ENCODE measurements at regions of chr14 and their contacts with region 1.

Region 1: DNA sequence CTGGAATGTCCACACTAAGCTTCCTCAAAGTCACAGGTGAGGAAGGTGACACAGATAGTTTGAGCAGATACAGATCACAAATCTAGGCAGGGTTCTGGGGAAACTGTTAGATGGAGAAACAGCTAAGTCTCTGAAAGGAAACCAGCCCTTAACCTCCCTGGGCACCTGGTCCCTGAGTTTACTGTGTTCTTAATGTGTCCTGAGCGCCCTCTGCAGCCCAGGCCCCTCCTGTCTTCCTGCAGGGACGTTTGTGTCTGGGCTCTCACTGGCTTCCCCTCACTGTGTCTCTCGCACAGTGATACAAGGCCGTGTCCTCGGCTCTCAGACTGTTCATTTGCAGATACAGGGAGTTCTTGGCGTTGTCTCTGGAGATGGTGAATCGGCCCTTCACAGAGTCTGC is 684.3 kb downstream of the TMEM121 start:
- DNase-seq: peak; percentile 36
- H3K4me3 Mint-ChIP-seq: no peak overlapping the region
- H3K27ac Mint-ChIP-seq: no peak overlapping the region
- H3K4me1 Mint-ChIP-seq: peaks cover 6% of the 10 kb centered on the region
- H3K27me3 Mint-ChIP-seq: peaks cover 39% of the 10 kb centered on the region

Region 2: GRCh38 chr14:106460916-106461315 is 250.3 kb after region 1 on chr14:
- CTCF ChIA-PET with region 1: interaction called, 70 read pairs
- POLR2A ChIA-PET with region 1: no interaction called
- DNase-seq: no peak
- H3K4me3 Mint-ChIP-seq: no peak overlapping the region
- H3K27ac Mint-ChIP-seq: no peak overlapping the region
- H3K4me1 Mint-ChIP-seq: peaks cover 13% of the 10 kb centered on the region
- H3K27me3 Mint-ChIP-seq: peaks cover 6% of the 10 kb centered on the region

Measured in activated CD4-positive, alpha-beta memory T cell treated with anti-CD3 and anti-CD28 coated beads, Interleukin-2, amount 10 ng/mL, durations not matched to agents 7 days and 5 days (primary cell).